ENCODE measurements at regions of chr9 and their contacts with region 1.

Region 1: DNA sequence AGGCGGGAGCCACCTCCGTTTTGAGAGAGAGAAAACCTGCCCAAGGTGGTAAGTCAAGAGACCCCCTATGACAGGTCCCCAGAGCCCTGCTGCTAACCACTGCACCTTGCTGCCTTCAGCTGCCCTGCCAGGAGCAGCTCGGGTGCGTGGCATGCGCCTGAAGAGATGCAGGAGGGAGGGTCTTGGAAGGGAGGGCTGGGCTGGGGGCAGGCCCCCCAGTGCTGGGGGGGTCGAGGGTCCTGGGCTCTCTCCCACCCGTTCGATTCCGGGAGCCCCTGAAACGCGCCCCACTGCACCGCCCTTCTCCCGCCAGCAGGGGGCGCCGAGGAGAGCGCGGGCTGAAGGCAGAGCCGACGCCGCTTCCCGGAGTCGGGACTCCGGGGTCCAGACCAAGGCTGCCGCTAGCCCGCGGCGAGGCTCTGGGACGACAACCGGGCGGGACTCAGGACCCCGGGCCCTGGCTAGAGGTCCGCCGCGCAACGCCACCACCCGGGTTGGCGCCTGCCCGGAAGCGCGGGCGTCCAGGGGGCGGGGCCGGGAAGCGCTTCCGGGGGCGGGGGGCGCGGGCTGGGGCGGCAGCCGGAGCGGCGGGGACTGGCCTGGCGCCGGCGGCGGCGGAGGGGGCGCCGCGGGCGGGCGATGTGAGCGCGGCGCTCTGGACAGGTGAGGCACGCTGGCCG is at the start of gene ZBTB34:
- DNase-seq: peak; percentile 70
- H3K4me3 Mint-ChIP-seq: peak within 1 kb of the TSS; percentile 81
- H3K27ac Mint-ChIP-seq: peak within 1 kb of the TSS; percentile 77
- H3K4me1 Mint-ChIP-seq: peaks cover 20% of the 10 kb centered on the region
- H3K27me3 Mint-ChIP-seq: no peaks in the 10 kb centered on the region
- total RNA-seq, gene ZBTB34: 4.2 to 4.6 TPM

Region 2: GRCh38 chr9:126794441-126794840 is 65.8 kb before region 1 on chr9:
- CTCF ChIA-PET with region 1: no interaction called
- intact Hi-C with region 1: no loop called
- DNase-seq: no peak
- H3K4me3 Mint-ChIP-seq: no peak overlapping the region
- H3K27ac Mint-ChIP-seq: no peak overlapping the region
- H3K4me1 Mint-ChIP-seq: no peaks in the 10 kb centered on the region
- H3K27me3 Mint-ChIP-seq: peaks cover 17% of the 10 kb centered on the region

Region 3: DNA sequence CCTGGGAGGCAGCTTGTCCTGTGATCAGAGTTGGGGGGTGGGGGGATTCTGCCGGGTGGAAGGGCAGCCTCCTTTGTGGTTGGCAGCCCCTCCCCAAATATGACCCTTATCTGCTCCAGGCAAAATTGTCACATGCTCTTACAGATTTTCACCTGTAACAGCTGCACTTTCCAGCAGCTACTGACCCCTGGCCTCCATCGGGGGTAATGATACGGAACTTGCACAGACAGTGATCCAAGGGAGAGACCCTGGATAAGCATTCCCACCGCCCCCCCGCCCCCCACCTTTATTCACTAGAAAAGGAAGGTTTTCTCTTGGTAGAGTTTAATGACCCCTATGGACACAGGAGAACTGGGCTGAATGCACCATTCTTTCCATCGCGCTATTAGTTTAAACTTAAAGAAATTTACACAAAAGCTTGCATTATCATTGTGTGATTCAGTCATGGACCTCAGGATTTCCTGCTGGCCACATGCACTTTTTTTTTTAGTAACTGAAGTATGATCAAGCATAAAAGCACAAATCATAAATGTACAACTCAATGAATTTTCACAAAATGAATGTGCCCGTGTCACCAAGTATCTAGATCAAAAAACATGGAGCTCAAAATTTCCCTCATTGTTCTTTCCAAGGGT is 10.5 kb before region 1 on chr9:
- CTCF ChIA-PET with region 1: interaction called, 13 read pairs
- intact Hi-C with region 1: no loop called
- DNase-seq: no peak
- H3K4me3 Mint-ChIP-seq: no peak overlapping the region
- H3K27ac Mint-ChIP-seq: no peak overlapping the region
- H3K4me1 Mint-ChIP-seq: no peaks in the 10 kb centered on the region
- H3K27me3 Mint-ChIP-seq: peaks cover 12% of the 10 kb centered on the region

Region 4: DNA sequence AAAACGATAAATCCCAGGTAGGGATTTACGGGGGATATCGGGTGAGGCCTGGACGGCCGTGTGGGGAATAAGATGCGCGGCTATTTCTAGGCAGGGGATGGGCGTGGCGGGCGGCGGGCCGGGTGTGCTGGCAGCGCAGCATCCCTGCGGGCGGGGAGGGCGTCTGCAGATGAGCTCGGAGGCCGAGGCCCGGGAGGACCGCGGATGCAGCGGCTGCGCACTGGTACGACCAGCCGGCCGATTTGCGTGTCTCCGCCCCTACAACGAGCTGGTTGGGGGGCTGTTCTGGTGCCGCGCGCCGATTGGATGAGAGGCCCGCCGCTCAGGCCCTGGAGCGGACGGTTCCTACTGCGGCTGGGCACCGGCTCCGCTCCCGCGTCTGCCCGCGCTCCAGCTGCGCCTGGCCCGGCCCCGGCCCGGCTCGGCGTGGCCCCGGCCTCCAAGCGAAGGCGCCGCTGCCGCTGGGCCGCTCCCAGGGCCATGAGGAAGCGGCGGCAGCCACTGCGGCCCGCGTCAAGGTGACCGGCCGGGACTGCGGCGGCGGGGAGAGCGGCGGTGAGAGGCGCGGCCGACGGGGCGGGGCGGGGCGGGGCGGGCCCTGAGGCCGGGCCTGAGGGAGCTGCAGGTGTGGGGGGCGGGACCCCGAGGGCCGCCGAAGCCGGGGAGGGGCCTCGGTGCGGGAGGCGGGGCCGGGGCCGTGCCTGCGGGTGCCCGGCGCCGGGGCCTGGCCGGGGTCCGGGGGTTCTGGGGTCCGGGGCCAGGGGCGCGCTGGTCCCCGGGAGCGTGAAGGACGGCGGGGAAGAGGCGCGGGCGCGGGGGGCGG is 54.5 kb after region 1 on chr9 and contains the start of gene RALGPS1:
- CTCF ChIA-PET with region 1: interaction called, 3 read pairs
- intact Hi-C with region 1: loop called (anchors 2 kb)
- DNase-seq: peak; percentile 93
- H3K4me3 Mint-ChIP-seq: peak within 1 kb of the TSS; percentile 71
- H3K27ac Mint-ChIP-seq: no peak within 1 kb of the TSS
- H3K4me1 Mint-ChIP-seq: peaks cover 8% of the 10 kb centered on the region
- H3K27me3 Mint-ChIP-seq: peaks cover 2% of the 10 kb centered on the region
- total RNA-seq, gene RALGPS1: 2.1 to 2.4 TPM

Region 5: DNA sequence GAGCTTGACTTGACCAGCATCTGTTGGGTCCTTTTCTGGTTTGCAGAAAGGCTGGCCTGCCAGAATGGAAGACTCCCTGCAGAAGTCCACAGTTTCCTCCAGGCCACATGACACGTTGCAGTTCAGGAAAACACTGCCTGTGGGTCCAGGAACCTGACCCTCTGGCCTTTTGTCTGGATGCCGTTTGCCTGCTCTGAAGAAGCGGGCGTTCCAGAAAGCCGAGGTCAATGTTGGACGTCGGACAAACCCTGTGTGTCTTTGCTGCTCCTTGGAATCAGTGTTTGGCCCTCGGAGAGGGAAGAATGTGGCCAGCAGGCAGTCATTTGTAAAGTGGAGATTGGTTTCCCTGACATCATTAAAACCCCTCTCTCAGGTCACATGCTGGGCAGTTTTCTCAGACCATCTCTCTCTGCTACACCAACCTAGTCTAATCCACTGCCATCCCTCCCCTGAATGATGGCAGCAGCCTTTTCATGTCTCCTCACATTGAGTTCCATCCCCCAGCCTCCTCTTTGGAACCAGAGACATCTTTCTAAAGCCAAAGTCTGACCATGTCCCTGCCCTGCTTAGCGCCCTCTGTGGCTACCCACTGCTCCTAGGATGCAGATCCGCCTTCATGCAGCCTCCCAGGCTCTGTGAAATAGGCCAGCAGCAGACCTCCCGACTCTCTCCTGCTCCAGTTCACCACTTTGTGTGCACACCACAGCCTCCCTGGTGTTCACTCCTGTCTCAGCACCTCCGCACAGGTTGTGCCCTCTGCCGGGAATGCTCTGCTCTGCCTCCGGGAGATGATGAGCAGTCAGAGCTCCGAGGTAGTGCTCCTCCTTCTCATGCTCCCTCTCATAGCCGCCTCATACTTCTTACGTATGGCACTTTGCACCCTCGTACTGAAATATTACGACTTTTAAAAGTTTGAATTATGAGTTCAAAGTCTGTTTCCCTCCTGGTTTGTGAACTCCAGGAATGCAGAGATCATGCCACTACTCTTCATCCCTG is 129.9 kb after region 1 on chr9:
- CTCF ChIA-PET with region 1: no interaction called
- intact Hi-C with region 1: no loop called
- DNase-seq: no peak
- H3K4me3 Mint-ChIP-seq: no peak overlapping the region
- H3K27ac Mint-ChIP-seq: no peak overlapping the region
- H3K4me1 Mint-ChIP-seq: peaks cover 34% of the 10 kb centered on the region
- H3K27me3 Mint-ChIP-seq: peaks cover 73% of the 10 kb centered on the region

Measured in activated naive CD4-positive, alpha-beta T cell treated with anti-CD3 and anti-CD28 coated beads for 36 hours (primary cell).